Common myeloid progenitor, CD34-positive (primary cell): ENCODE measurements at regions of chr1 and their contacts with region 1.

Region 1: DNA sequence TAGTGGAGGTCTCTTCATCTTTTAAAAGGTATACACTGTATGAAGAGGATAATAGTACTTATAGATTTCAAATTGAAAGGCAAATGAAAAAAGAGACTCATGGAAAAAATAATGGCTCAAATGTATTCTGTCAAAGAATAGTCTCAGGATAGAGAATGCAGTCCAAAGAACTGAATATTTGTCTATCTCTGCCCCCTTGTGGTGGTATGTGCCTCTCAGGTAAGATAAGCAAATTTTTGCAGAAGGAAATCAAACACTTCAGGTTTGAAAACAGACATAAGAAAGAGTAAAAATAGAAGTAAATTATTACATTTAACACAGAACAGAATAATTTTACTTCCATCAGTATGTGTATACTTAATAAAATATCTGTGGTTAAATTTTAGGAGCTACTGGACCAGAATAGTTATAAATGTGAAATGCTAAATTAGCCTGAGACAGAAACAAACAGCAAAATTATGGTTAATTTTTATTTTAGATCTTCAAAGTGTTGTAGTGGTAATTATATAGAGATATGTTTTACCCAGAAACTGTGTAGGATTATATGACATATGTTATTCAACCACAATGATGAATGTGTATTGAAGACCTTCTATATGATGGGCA is 164.4 kb upstream of the PALMD start:
- DNase-seq: peak; percentile 53 to 71 (median 68)
- H3K4me3 ChIP-seq: no peak overlapping the region
- H3K27ac ChIP-seq: no peak overlapping the region
- H3K4me1 ChIP-seq: no peaks in the 10 kb centered on the region
- H3K27me3 ChIP-seq: no peaks in the 10 kb centered on the region

Region 2: DNA sequence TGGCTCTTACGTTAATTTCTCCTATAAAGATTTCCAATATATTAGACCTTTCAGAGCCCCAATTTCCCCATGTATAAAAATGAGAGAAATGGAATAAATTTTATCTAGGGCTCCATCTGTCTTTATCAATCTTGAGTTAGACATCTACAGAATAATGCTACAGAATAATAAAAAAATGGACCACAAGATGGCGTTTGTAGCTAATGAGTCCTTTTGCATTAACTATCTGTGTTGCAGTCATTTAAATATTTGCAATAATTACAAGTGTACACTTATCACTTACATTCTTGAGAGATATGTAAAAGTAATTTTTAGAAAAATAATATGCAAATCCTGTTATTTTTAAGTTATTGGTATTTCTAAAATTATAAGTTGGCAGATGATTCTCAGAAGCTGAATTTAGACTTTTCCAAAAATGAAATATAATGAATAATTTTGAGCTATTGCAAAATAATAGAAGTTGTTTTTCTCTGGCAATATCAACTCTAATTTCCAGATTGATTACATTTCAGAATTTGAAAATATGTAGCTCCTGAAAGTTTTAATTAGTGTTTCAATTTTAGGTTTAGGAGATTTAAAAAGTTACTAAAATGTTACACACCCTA is 732.2 kb before region 1 on chr1:
- CTCF ChIA-PET with region 1: interaction called, 34 read pairs
- POLR2A ChIA-PET with region 1: no interaction called
- DNase-seq: peak; percentile 11 to 41 (median 34)
- H3K4me3 ChIP-seq: no peak overlapping the region
- H3K27ac ChIP-seq: no peak overlapping the region
- H3K4me1 ChIP-seq: no peaks in the 10 kb centered on the region
- H3K27me3 ChIP-seq: no peaks in the 10 kb centered on the region

Region 3: GRCh38 chr1:98794196-98794886 is 687.2 kb before region 1 on chr1:
- CTCF ChIA-PET with region 1: interaction called, 38 read pairs
- POLR2A ChIA-PET with region 1: no interaction called
- DNase-seq: peak; percentile 65 to 89 (median 84)
- H3K4me3 ChIP-seq: no peak overlapping the region
- H3K27ac ChIP-seq: no peak overlapping the region
- H3K4me1 ChIP-seq: peaks cover 0 to 3% (median 0%) of the 10 kb centered on the region in 4 experiments
- H3K27me3 ChIP-seq: peaks cover 0 to 17% (median 2%) of the 10 kb centered on the region in 5 experiments

Region 4: DNA sequence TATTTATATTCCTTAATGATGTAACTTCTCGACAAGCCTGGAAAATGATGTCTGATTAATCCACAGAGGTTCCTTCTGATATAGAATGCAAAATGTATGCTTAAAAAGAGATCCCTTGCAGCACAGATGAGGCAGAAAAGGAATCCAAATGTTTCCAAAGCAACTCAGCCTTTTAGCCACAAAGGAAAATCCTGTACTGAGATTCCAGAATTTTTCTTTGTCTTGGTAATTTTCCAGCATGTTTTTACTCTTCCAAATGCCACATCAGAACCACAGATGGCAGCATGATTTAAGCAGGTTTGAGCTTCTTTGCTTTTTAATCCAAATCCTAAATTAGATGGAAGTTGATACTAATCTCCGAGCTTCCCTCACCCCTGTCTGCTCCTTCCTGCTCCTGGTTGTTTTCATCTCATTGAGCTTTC is 11.9 kb before region 1 on chr1:
- CTCF ChIA-PET with region 1: interaction called, 19 read pairs
- POLR2A ChIA-PET with region 1: no interaction called
- DNase-seq: no peak
- H3K4me3 ChIP-seq: no peak overlapping the region
- H3K27ac ChIP-seq: no peak overlapping the region
- H3K4me1 ChIP-seq: no peaks in the 10 kb centered on the region
- H3K27me3 ChIP-seq: no peaks in the 10 kb centered on the region